GM12878 (cell line): ENCODE measurements at regions of chr3 and their contacts with region 1.

Region 1: GRCh38 chr3:132399054-132399929 is 18.0 kb upstream of the DNAJC13 start:
- DNase-seq: no peak
- ATAC-seq: peak; percentile 82
- H3K4me3 ChIP-seq: no peak overlapping the region
- H3K27ac ChIP-seq: no peak overlapping the region
- H3K4me1 ChIP-seq: no peaks in the 10 kb centered on the region
- H3K27me3 ChIP-seq: no peaks in the 10 kb centered on the region; a peak in 1 of 4 replicates
- CTCF ChIP-seq: peak; percentile 77 to 92 (median 83)
- EP300 ChIP-seq: no peak
- POLR2A ChIP-seq: no peak
- RAD21 ChIP-seq: peak; percentile 95

Region 2: GRCh38 chr3:131988209-131988608 is 411.1 kb before region 1 on chr3:
- CTCF ChIA-PET with region 1: no interaction called
- POLR2A ChIA-PET with region 1: no interaction called
- RAD21 ChIA-PET with region 1: no interaction called
- SMC1A ChIA-PET with region 1: no interaction called
- in situ Hi-C with region 1: no loop called
- intact Hi-C with region 1: no loop called
- DNase-seq: no peak
- ATAC-seq: no peak
- H3K4me3 ChIP-seq: no peak overlapping the region
- H3K27ac ChIP-seq: no peak overlapping the region
- H3K4me1 ChIP-seq: no peaks in the 10 kb centered on the region
- H3K27me3 ChIP-seq: no peaks in the 10 kb centered on the region
- CTCF ChIP-seq: no peak
- EP300 ChIP-seq: no peak
- POLR2A ChIP-seq: no peak
- RAD21 ChIP-seq: no peak

Region 3: DNA sequence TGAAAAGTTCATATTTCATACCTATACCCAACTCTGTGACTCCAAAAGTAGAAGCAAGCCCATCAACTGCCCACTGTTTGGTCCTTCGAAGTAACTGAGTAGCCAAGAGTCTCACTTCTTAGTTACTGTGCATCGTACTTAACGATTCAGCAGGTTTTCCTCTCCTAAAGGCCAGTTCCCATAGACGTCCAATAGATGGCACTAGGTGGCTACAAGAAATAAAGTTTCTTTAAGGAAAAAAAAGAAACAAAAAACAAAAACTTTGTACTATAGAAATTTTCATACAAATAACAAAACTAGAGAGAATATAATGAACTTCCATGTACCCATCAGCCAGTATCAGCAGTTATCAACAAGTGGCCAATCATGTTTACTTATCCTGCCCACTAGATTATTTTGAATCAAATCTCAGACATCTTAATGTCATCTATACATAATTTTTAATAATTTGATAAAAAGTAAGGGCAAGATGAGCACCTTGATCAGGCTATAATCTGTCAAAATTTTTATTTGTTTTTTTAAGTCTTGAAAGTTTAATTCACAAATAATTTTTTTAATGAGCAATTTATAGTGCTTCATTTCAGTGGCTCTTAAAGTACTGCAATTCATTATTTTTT is 145.9 kb before region 1 on chr3:
- CTCF ChIA-PET with region 1: interaction called, 3 read pairs
- POLR2A ChIA-PET with region 1: no interaction called
- RAD21 ChIA-PET with region 1: no interaction called
- SMC1A ChIA-PET with region 1: no interaction called
- in situ Hi-C with region 1: loop called (anchors 5 kb)
- intact Hi-C with region 1: loop called (anchors 2 kb)
- DNase-seq: no peak
- ATAC-seq: peak; percentile 74
- H3K4me3 ChIP-seq: no peak overlapping the region
- H3K27ac ChIP-seq: no peak overlapping the region
- H3K4me1 ChIP-seq: no peaks in the 10 kb centered on the region
- H3K27me3 ChIP-seq: no peaks in the 10 kb centered on the region; a peak in 1 of 4 replicates
- CTCF ChIP-seq: peak; percentile 58 to 67 (median 58)
- EP300 ChIP-seq: no peak
- POLR2A ChIP-seq: no peak
- RAD21 ChIP-seq: peak; percentile 68

Region 4: GRCh38 chr3:132317229-132317948 is 81.9 kb before region 1 on chr3 and contains the start of gene ACP3:
- CTCF ChIA-PET with region 1: no interaction called
- POLR2A ChIA-PET with region 1: no interaction called
- RAD21 ChIA-PET with region 1: no interaction called
- SMC1A ChIA-PET with region 1: no interaction called
- in situ Hi-C with region 1: no loop called
- intact Hi-C with region 1: no loop called
- DNase-seq: peak; percentile 8
- ATAC-seq: peak; percentile 61
- H3K4me3 ChIP-seq: no peak within 1 kb of the TSS
- H3K27ac ChIP-seq: no peak within 1 kb of the TSS
- H3K4me1 ChIP-seq: no peaks in the 10 kb centered on the region
- H3K27me3 ChIP-seq: peaks cover 0 to 3% of the 10 kb centered on the region in 2 experiments; a peak in 1 of 4 replicates
- CTCF ChIP-seq: no peak
- EP300 ChIP-seq: no peak
- POLR2A ChIP-seq: no peak
- RAD21 ChIP-seq: no peak
- polyA plus RNA-seq, gene ACP3: 0.05 TPM in 1 of 2 experiments, not detected in the other

Region 5: GRCh38 chr3:132343018-132343612 is 56.2 kb before region 1 on chr3:
- CTCF ChIA-PET with region 1: interaction called, 195 read pairs
- POLR2A ChIA-PET with region 1: no interaction called
- RAD21 ChIA-PET with region 1: interaction called, 3 read pairs
- SMC1A ChIA-PET with region 1: interaction called, 4 read pairs
- in situ Hi-C with region 1: loop called (anchors 5 kb)
- intact Hi-C with region 1: no loop called
- DNase-seq: no peak
- ATAC-seq: peak; percentile 80
- H3K4me3 ChIP-seq: no peak overlapping the region
- H3K27ac ChIP-seq: no peak overlapping the region
- H3K4me1 ChIP-seq: no peaks in the 10 kb centered on the region
- H3K27me3 ChIP-seq: no peaks in the 10 kb centered on the region
- CTCF ChIP-seq: peak; percentile 69 to 79 (median 75)
- EP300 ChIP-seq: no peak
- POLR2A ChIP-seq: no peak
- RAD21 ChIP-seq: peak; percentile 65

Region 6: DNA sequence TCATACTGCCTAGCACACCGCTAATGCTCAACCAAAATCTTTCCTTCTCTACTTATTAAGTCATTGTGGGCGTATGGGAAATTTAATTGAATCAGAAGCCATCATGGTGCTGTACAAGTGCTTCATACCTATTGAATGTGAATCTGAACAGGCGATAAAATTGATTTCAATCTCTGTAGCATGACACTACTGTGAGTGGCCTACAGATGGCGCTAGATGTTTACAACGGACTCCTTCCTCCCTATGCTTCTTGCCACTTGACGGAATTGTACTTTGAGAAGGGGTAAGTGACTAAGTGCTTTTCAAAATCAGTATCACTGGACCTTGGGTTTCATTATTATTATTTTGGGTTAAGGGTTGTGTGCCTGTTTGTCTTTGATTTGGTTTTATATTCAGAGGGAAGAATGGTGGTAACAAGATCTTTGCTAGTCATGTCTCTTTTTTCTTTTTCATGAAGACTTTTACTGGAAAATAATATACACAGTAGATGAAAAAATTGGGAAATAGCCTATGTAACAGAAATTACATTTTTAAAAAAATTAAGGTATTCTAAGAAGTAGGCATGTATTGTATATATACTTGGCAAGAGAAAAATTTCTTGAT is 46.6 kb before region 1 on chr3:
- CTCF ChIA-PET with region 1: interaction called, 195 read pairs
- POLR2A ChIA-PET with region 1: no interaction called
- RAD21 ChIA-PET with region 1: interaction called, 70 read pairs
- SMC1A ChIA-PET with region 1: interaction called, 92 read pairs
- in situ Hi-C with region 1: loop called (anchors 5 kb)
- intact Hi-C with region 1: loop called (anchors 1 kb)
- DNase-seq: peak; percentile 45
- ATAC-seq: peak; percentile 93
- H3K4me3 ChIP-seq: no peak overlapping the region
- H3K27ac ChIP-seq: no peak overlapping the region
- H3K4me1 ChIP-seq: no peaks in the 10 kb centered on the region
- H3K27me3 ChIP-seq: no peaks in the 10 kb centered on the region; a peak in 1 of 4 replicates
- CTCF ChIP-seq: peak; percentile 84 to 90 (median 90)
- EP300 ChIP-seq: no peak
- POLR2A ChIP-seq: no peak
- RAD21 ChIP-seq: peak; percentile 94